ENCODE measurements at regions of chr5 and their contacts with region 1.

Region 1: DNA sequence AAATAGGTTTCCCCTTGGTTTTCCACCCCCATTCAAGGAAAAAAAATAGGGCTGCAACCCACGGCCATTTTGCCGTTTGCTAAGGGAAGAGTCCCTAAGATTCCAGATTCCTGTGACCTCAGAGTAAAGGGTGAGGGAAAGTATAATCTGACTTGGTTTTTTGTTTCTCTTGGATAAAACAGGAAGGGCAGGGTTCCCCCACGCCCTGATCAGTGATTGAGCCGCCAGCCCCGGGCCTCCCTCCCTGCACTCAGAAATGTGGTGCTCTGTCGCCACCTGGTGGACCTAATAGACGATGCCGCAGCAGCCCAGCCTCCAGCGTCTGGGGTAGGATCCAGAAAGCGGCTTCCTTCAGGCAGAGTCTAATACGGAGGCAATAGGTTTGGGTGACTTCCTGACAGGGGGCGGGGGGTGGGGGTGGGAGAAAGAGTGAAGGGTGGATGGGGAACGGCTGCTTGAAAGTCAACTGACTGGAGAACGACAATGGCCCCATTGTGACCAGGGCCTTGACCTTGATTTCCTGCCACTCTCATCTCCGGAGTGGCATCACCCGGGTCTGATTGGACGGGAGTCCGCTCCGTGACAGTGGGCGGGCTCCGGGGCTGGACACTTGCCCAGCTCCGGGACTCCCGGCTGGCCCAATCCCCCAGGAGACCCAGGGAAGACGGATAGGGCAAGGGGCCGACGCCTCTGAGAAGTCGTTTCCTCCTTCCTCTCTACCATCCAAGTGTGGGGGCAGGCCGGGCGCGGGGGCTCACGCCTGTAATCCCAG is 17.8 kb upstream of the CYSTM1 start:
- DNase-seq: peak; percentile 94
- H3K4me3 ChIP-seq: peak overlapping the region; percentile 49 to 59
- H3K27ac ChIP-seq: peak overlapping the region; percentile 73 to 81
- H3K4me1 ChIP-seq: peaks cover 5% of the 10 kb centered on the region
- H3K27me3 ChIP-seq: no peaks in the 10 kb centered on the region
- CTCF ChIP-seq: peak; percentile 90 to 97 (median 94)
- POLR2A ChIP-seq: no peak

Region 2: GRCh38 chr5:139787568-139788293 is 369.5 kb before region 1 on chr5:
- intact Hi-C with region 1: loop called (anchors 10 kb)
- DNase-seq: peak; percentile 93
- H3K4me3 ChIP-seq: peak overlapping the region; percentile 51 to 64
- H3K27ac ChIP-seq: peak overlapping the region; percentile 24 to 78
- H3K4me1 ChIP-seq: peaks cover 17% of the 10 kb centered on the region
- H3K27me3 ChIP-seq: no peaks in the 10 kb centered on the region
- CTCF ChIP-seq: peak; percentile 95 to 99 (median 98)
- POLR2A ChIP-seq: no peak

Region 3: DNA sequence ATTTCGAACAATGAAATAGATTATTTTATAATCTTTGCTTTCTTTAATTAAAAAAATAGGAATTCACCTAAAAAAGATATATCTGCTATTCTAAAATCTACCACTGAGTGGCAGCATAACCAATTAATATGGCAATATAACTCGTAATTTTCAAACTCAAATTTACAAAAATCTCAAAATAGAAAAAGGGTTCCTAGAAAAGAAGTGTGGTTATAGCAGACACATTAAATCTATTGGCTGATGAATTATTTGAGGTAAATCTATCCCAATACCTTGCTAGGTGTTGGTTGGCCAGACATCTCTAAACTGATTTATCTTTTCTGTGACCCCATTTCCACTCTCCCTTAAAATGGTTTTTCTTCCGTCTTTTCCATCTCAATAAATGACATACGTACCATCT is 83.9 kb before region 1 on chr5:
- intact Hi-C with region 1: loop called (anchors 5 kb)
- DNase-seq: no peak
- H3K4me3 ChIP-seq: no peak overlapping the region
- H3K27ac ChIP-seq: no peak overlapping the region
- H3K4me1 ChIP-seq: no peaks in the 10 kb centered on the region
- H3K27me3 ChIP-seq: no peaks in the 10 kb centered on the region
- CTCF ChIP-seq: peak; percentile 32 to 65 (median 47)
- POLR2A ChIP-seq: no peak

Region 4: DNA sequence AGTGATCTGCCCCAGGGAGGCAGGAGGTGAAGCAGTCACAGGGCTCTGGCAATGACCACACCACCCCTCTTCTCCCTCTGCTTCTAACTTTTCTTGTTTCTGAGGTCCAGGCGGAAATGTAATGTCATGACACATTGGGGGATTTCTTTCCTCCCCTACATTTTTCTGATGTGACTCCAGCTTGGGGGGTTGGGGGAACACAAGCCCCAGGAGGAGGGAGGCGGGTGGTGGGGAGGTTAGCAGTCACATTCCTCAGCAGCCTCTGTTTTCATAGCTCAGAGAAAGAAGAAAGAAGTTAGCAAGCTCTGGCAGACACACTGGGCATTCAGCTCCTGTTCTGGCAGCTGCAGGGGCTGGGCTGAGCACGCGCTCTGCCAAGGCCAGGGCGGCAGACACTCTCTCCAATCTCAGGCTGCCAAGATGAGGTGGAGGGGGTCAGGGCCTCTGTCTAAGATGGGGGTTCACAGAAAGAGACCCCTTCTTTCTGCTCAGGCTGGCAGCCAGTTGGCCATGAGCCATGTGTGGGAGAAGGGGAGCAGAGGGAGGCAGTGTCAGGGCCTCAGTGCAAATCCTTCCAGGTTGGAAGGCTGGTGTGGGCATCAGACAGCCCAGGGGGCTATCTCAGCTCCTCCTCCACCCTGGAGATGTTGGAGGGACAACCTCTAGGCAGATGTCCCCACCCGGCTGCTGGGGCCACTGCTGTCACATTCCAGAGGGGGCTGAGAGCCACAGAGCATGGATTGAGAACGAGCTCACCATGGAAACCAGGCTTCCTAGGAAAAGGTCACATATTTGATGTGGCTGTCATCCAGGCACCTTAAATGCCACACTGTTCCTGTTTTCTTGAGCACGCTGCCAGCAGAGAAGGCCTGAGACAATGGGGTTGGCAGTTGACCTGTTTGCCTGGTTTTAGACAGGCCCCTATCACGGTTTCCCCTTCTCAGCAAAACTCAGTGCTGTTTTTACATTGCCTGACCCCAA is 165.8 kb after region 1 on chr5:
- intact Hi-C with region 1: no loop called
- DNase-seq: peak; percentile 81
- H3K4me3 ChIP-seq: no peak overlapping the region
- H3K27ac ChIP-seq: peak overlapping the region; percentile 51 to 56
- H3K4me1 ChIP-seq: peaks cover 27% of the 10 kb centered on the region
- H3K27me3 ChIP-seq: no peaks in the 10 kb centered on the region
- CTCF ChIP-seq: no peak
- POLR2A ChIP-seq: no peak